ENCODE measurements at regions of chr1 and their contacts with region 1.

Region 1: GRCh38 chr1:26695356-26696118 is at the start of gene ARID1A:
- DNase-seq: peak; percentile 93 to 99 (median 96)
- H3K4me3 ChIP-seq: peak within 1 kb of the TSS; percentile 83
- H3K4me3 Mint-ChIP-seq: peak within 1 kb of the TSS; percentile 90 to 97 (median 94)
- H3K27ac ChIP-seq: peak within 1 kb of the TSS; percentile 86
- H3K27ac Mint-ChIP-seq: peak within 1 kb of the TSS; percentile 85 to 96 (median 94)
- H3K4me1 ChIP-seq: peaks cover 46% of the 10 kb centered on the region
- H3K4me1 Mint-ChIP-seq: peaks cover 28 to 38% (median 30%) of the 10 kb centered on the region in 3 donors
- H3K27me3 ChIP-seq: no peaks in the 10 kb centered on the region
- H3K27me3 Mint-ChIP-seq: no peaks in the 10 kb centered on the region
- total RNA-seq, gene ARID1A: 88.4 to 90.9 TPM

Region 2: GRCh38 chr1:26602378-26602959 is 93.1 kb before region 1 on chr1:
- CTCF ChIA-PET with region 1: interaction called, 15 read pairs
- POLR2A ChIA-PET with region 1: interaction called, 4 read pairs
- DNase-seq: peak in 3 of 5 donors; percentile 30 to 61 (median 56)
- H3K4me3 ChIP-seq: no peak overlapping the region
- H3K4me3 Mint-ChIP-seq: no peak overlapping the region
- H3K27ac ChIP-seq: no peak overlapping the region
- H3K27ac Mint-ChIP-seq: no peak overlapping the region
- H3K4me1 ChIP-seq: peaks cover 8% of the 10 kb centered on the region
- H3K4me1 Mint-ChIP-seq: peaks cover 7 to 10% (median 9%) of the 10 kb centered on the region in 3 donors
- H3K27me3 ChIP-seq: no peaks in the 10 kb centered on the region
- H3K27me3 Mint-ChIP-seq: peaks cover 0 to 2% of the 10 kb centered on the region in 2 donors

Region 3: GRCh38 chr1:26705788-26706311 is 10.3 kb after region 1 on chr1:
- CTCF ChIA-PET with region 1: interaction called, 5 read pairs
- POLR2A ChIA-PET with region 1: interaction called, 10 read pairs
- DNase-seq: no peak
- H3K4me3 ChIP-seq: peak overlapping the region; percentile 19
- H3K4me3 Mint-ChIP-seq: peak overlapping the region in 5 of 7 donors; percentile 57 to 73 (median 60)
- H3K27ac ChIP-seq: no peak overlapping the region
- H3K27ac Mint-ChIP-seq: peak overlapping the region; percentile 4 to 84 (median 70)
- H3K4me1 ChIP-seq: peaks cover 74% of the 10 kb centered on the region
- H3K4me1 Mint-ChIP-seq: peaks cover 18 to 45% (median 42%) of the 10 kb centered on the region in 3 donors
- H3K27me3 ChIP-seq: no peaks in the 10 kb centered on the region
- H3K27me3 Mint-ChIP-seq: no peaks in the 10 kb centered on the region

Region 4: GRCh38 chr1:26728645-26729044 is 33.1 kb after region 1 on chr1:
- CTCF ChIA-PET with region 1: interaction called, 14 read pairs
- POLR2A ChIA-PET with region 1: interaction called, 6 read pairs
- DNase-seq: no peak
- H3K4me3 ChIP-seq: no peak overlapping the region
- H3K4me3 Mint-ChIP-seq: peak overlapping the region in 2 of 7 donors; percentile 29 to 32
- H3K27ac ChIP-seq: no peak overlapping the region
- H3K27ac Mint-ChIP-seq: peak overlapping the region; percentile 20 to 94 (median 72)
- H3K4me1 ChIP-seq: peaks cover 67% of the 10 kb centered on the region
- H3K4me1 Mint-ChIP-seq: peaks cover 66 to 91% (median 87%) of the 10 kb centered on the region in 3 donors
- H3K27me3 ChIP-seq: no peaks in the 10 kb centered on the region
- H3K27me3 Mint-ChIP-seq: no peaks in the 10 kb centered on the region

Region 5: GRCh38 chr1:26799479-26800142 is 104.1 kb after region 1 on chr1:
- CTCF ChIA-PET with region 1: interaction called, 3 read pairs
- POLR2A ChIA-PET with region 1: interaction called, 10 read pairs
- DNase-seq: peak in 1 of 5 donors; percentile 55
- H3K4me3 ChIP-seq: peak overlapping the region; percentile 10
- H3K4me3 Mint-ChIP-seq: peak overlapping the region; percentile 4 to 83 (median 77)
- H3K27ac ChIP-seq: peak overlapping the region; percentile 65
- H3K27ac Mint-ChIP-seq: peak overlapping the region; percentile 94 to 98 (median 97)
- H3K4me1 ChIP-seq: peaks cover 37% of the 10 kb centered on the region
- H3K4me1 Mint-ChIP-seq: peaks cover 38 to 59% (median 55%) of the 10 kb centered on the region in 3 donors
- H3K27me3 ChIP-seq: no peaks in the 10 kb centered on the region
- H3K27me3 Mint-ChIP-seq: no peaks in the 10 kb centered on the region

Region 6: DNA sequence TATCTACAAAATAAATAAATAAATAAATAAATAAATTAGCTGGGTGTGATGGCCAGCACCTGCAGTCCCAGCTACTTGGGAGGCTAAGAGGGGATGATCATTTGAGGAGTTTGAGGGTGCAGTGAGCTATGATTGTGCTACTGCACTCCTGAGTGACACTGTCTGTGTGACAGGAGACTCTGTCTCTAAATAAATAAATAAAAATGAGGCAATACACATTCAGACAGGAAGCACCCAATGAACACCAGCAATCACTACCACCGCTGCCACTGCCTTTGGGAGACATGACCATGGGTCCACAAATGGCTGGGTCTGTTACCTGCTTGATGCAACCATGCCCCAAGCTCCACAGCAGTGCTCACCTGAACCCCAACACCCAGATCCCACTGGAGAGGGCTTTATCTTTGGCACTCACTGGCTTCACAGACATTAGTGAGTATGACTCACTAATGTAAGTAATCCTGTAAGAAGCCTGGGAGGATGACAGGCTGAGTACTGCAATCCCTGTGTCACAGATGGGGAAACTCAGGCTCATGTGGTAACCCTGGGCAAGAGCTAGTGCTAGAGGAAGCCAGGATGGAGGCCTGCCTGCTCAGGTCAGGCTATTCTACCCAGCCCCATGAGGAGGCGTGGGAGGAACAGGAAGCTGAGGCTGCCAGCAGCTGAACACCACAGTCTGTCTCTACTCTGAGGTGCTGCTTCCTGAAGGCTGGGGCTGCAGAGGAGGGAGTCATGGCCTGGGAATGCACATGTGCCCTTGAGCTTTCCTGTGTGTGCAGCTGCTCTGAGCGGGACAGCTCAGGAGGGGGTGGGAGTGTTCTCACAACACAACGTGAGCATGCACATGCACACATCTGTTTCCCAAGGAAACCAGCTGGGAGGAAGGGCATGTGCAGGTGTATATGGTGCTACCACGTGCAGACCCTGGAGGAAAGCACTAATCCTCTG is 416.4 kb after region 1 on chr1:
- CTCF ChIA-PET with region 1: no interaction called
- POLR2A ChIA-PET with region 1: no interaction called
- DNase-seq: peak; percentile 46 to 80 (median 59)
- H3K4me3 ChIP-seq: peak overlapping the region; percentile 39
- H3K4me3 Mint-ChIP-seq: peak overlapping the region in 5 of 7 donors; percentile 49 to 76 (median 62)
- H3K27ac ChIP-seq: peak overlapping the region; percentile 35
- H3K27ac Mint-ChIP-seq: peak overlapping the region; percentile 55 to 95 (median 88)
- H3K4me1 ChIP-seq: peaks cover 44% of the 10 kb centered on the region
- H3K4me1 Mint-ChIP-seq: peaks cover 40 to 66% (median 56%) of the 10 kb centered on the region in 3 donors
- H3K27me3 ChIP-seq: no peaks in the 10 kb centered on the region
- H3K27me3 Mint-ChIP-seq: no peaks in the 10 kb centered on the region